Posterior vena cava (tissue), 2 donors: ENCODE measurements at regions of chr9 and their contacts with region 1.

Region 1: DNA sequence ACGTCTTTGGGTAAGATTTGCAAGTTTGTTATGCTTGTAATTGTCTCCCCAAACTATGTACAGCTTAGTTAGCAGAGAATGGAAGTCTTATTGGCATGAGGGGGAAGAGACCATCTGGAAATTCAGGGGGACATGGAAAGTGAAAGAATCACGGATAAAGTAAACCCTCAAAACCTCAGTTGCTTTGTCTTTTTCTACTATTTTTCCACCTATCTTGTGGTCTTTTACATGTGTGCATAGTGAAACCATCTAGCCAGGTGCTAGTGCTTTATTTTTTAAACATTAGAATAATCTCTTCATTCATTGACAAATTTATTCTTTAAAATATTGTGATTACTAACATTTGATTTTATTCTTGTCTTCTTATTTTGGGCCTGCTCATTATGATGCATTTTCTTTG is 441.1 kb upstream of the RORB start:
- DNase-seq: no peak

Region 2: DNA sequence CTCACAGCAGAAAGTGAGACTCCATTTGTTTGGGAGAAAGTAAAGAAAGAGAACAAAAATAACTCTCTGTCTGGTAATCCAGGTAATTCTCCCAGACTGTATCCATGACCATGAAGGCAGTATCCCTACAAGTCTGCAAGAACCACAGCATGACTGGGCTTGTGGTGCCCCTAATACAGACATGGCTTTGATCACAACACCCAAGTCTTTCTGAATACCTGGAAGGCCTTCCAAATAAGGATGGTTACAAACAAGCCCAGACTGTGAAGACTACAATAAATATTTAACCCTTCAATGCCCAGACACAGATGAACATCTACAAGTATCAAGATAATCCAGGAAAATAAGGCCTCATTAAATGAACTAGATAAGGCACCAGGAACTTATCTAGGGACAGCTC is 40.0 kb before region 1 on chr9:
- intact Hi-C with region 1: loop called in 1 of 2 experiments (anchors 1 kb)
- DNase-seq: no peak

Region 3: DNA sequence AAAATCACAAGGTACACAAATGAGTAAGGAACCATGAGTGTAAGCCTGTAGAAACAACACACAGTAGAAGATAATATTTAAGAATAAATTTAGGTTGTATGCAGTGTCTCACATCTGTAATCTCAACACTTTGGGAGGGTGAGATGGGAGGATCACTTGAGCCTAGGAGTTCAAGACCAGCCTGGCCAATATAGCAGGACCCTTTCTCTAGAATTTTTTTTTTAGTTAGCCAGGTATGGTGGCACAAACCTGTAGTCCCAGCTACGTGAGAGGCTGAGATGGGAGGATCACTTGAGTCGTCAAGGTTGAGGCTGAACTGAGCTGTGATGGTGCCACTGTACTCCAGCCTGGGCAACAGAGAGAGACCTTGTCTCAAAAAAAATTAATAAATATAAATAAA is 39.9 kb after region 1 on chr9:
- intact Hi-C with region 1: no loop called
- DNase-seq: no peak